Dendritic cell treated with granulocyte-macrophage colony-stimulating factor and Interleukin-4, amounts not matched to agents 40 ng/mL and 50 ng/mL, for 4 days (primary cell): ENCODE measurements at regions of chr7 and their contacts with region 1.

Region 1: GRCh38 chr7:150567169-150567568 is at the start of gene GIMAP4:
- H3K4me3 Mint-ChIP-seq: peak within 1 kb of the TSS; percentile 81
- H3K27ac Mint-ChIP-seq: peak within 1 kb of the TSS; percentile 87
- H3K4me1 Mint-ChIP-seq: peaks cover 40% of the 10 kb centered on the region
- H3K27me3 Mint-ChIP-seq: no peaks in the 10 kb centered on the region

Region 2: DNA sequence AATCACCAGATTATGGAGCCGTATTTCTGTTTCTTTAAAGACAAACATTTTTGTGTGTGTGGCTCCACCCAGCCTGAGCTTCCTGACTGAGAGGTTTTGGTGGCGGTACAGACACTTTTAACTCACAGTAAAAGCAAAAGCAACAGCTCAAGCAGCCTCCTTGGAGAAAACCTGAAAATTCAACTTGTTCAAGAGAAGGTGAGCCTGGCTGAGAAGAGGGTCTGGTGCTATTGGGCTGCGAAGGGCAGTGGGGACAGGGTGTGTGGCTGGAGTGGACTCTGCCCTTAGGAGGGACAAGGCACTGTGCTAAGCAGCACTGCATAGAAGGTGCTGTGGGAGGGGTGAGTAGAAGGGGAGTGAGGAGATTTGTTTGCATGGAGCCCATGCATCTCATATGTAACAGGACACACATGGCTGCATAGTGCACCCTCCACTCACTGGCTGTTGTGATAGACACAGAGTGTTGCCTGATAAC is 52.4 kb before region 1 on chr7 and contains the start of gene GIMAP7:
- intact Hi-C with region 1: loop called (anchors 5 kb)
- H3K4me3 Mint-ChIP-seq: peak within 1 kb of the TSS; percentile 95
- H3K27ac Mint-ChIP-seq: peak within 1 kb of the TSS; percentile 97
- H3K4me1 Mint-ChIP-seq: peaks cover 30% of the 10 kb centered on the region
- H3K27me3 Mint-ChIP-seq: no peaks in the 10 kb centered on the region

Region 3: GRCh38 chr7:150620617-150621371 is 53.6 kb after region 1 on chr7:
- intact Hi-C with region 1: no loop called
- H3K4me3 Mint-ChIP-seq: no peak overlapping the region
- H3K27ac Mint-ChIP-seq: no peak overlapping the region
- H3K4me1 Mint-ChIP-seq: no peaks in the 10 kb centered on the region
- H3K27me3 Mint-ChIP-seq: no peaks in the 10 kb centered on the region